Endothelial cell of umbilical vein (primary cell): ENCODE measurements at regions of chr11 and their contacts with region 1.

Region 1: GRCh38 chr11:126303623-126304456 is at the start of gene DCPS:
- DNase-seq: peak; percentile 96
- H3K4me3 ChIP-seq: peak within 1 kb of the TSS; percentile 28 to 74 (median 35)
- H3K27ac ChIP-seq: peak within 1 kb of the TSS; percentile 55
- H3K4me1 ChIP-seq: no peaks in the 10 kb centered on the region
- H3K27me3 ChIP-seq: no peaks in the 10 kb centered on the region
- CTCF ChIP-seq: no peak
- POLR2A ChIP-seq: peak; percentile 92
- total RNA-seq, gene DCPS: 19.6 and 21.8 TPM in 2 replicates

Region 2: DNA sequence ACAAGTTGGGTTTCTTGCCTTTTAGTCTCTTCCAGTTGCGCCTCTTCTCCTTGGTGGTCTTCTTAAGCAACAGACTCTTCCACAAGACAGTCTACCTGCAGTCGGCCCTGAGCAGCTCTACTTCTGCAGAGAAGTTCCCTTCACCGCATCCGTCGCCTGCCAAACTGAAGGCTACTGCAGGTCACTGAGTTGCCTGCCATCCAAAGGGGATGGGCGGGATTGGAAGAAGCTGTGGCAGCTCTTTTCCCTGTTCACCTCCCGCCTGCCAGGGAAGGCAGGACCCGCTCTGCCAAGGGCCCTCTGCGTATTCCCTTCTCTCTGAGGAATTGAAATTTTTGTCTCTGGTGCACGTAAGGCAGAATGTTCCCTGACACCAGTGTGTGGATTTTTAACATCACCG is 720.3 kb before region 1 on chr11:
- CTCF ChIA-PET with region 1: no interaction called
- POLR2A ChIA-PET with region 1: interaction called, 11 read pairs
- dilution Hi-C with region 1: no loop called
- intact Hi-C with region 1: no loop called
- DNase-seq: no peak
- H3K4me3 ChIP-seq: no peak overlapping the region
- H3K27ac ChIP-seq: no peak overlapping the region
- H3K4me1 ChIP-seq: peaks cover 4% of the 10 kb centered on the region
- H3K27me3 ChIP-seq: no peaks in the 10 kb centered on the region
- CTCF ChIP-seq: no peak
- POLR2A ChIP-seq: no peak

Region 3: DNA sequence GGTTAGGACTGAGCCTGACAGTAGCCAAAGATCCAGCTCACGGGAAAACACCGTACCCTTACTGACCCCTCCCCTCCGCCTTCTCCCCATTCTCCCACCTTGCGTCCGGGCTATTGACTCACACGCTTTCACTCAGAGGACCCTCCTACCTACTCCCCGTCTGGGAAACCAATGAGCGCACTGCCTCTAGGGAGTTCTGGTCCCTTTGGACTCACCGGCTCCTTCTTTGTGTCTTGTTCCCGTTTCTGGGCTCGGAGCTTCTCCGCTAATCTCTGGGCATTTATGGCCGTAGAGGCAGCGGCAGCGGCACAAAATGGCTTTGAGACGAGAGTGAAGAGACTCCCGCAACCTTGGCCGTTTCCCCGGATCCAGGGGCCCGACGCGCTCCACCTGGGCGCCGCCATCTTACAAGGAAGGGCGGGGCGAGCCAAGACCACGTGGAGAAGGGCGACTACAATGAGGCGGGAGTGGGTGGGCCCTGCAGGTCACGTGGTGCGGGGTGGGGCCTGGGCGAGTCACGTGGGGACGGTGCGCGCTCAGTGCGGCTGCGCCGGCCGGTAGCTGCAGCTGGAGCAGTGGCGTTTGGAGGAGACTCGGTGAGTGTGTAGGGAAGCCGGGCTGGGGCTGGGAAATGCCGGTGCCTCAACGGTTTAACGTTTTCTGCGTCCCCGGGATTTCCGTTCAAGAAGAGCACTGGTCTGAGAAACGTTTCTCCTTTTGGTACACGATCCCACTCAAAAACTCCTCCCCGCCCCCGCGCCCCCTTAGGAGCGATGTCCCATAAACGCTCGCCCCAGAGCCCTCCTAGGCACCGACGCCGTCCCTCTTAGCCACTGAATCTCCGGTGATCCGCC is 92.4 kb before region 1 on chr11 and contains the starts of genes FAM118B and RPUSD4:
- CTCF ChIA-PET with region 1: no interaction called
- POLR2A ChIA-PET with region 1: no interaction called
- dilution Hi-C with region 1: no loop called
- intact Hi-C with region 1: loop called (anchors 1 kb)
- DNase-seq: peak; percentile 98
- H3K4me3 ChIP-seq: peak within 1 kb of the TSS; percentile 65 to 73 (median 72)
- H3K27ac ChIP-seq: peak within 1 kb of the TSS; percentile 36
- H3K4me1 ChIP-seq: peaks cover 17% of the 10 kb centered on the region
- H3K27me3 ChIP-seq: no peaks in the 10 kb centered on the region
- CTCF ChIP-seq: no peak
- POLR2A ChIP-seq: peak; percentile 98
- total RNA-seq, gene FAM118B: 35.3 and 35.8 TPM in 2 replicates
- total RNA-seq, gene RPUSD4: 36.5 and 40.8 TPM in 2 replicates

Region 4: GRCh38 chr11:126282736-126283591 is 20.9 kb before region 1 on chr11 and contains the start of gene TIRAP:
- CTCF ChIA-PET with region 1: interaction called, 4 read pairs
- POLR2A ChIA-PET with region 1: no interaction called
- dilution Hi-C with region 1: no loop called
- intact Hi-C with region 1: loop called (anchors 1 kb)
- DNase-seq: peak; percentile 55
- H3K4me3 ChIP-seq: peak within 1 kb of the TSS; percentile 19 to 62 (median 50)
- H3K27ac ChIP-seq: peak within 1 kb of the TSS; percentile 26
- H3K4me1 ChIP-seq: peaks cover 13% of the 10 kb centered on the region
- H3K27me3 ChIP-seq: no peaks in the 10 kb centered on the region
- CTCF ChIP-seq: peak in 1 of 2 donors; percentile 13
- POLR2A ChIP-seq: peak; percentile 70
- total RNA-seq, gene TIRAP: 8.7 and 11.0 TPM in 2 replicates

Region 5: DNA sequence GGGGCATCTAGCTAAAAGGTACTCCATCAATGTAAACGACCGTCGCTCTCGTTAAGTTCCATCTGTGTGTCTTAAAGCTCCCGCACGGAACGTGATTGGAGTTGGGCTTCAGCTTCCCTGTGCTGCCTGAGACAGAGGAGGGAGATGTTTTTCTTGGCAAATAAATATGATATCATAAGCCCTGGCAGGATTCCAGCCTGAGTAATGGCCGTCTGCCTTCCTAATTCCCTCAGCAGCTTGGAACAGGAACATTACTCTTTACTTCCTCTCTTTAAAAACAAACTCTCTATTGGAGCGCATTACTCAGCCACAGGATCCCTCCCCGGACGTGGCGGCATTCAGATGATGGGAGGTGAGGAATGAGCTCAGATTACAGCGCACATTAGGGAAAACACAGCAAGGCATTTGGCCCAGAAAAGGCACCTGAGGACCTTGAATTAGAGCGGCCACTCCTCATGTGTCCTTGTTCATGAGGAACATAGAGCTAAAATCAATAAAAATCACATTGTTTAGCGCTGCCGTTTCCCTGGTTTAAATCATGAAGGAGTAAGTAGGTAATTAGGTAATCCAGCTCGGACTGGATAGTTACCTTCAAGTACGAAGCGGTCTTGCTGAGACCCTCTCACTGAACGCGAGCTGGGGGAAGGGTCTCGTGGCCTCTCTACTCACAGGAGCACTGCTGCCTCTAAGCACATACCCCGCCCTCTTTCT is 282.1 kb after region 1 on chr11:
- CTCF ChIA-PET with region 1: interaction called, 4 read pairs
- POLR2A ChIA-PET with region 1: no interaction called
- dilution Hi-C with region 1: no loop called
- intact Hi-C with region 1: loop called (anchors 5 kb)
- DNase-seq: peak; percentile 99
- H3K4me3 ChIP-seq: peak overlapping the region in 1 of 3 experiments; percentile 28
- H3K27ac ChIP-seq: peak overlapping the region; percentile 82
- H3K4me1 ChIP-seq: peaks cover 11% of the 10 kb centered on the region
- H3K27me3 ChIP-seq: no peaks in the 10 kb centered on the region
- CTCF ChIP-seq: no peak
- POLR2A ChIP-seq: no peak